Psoas muscle (tissue), 8 donors: ENCODE measurements at regions of chr17 and their contacts with region 1.

Region 1: DNA sequence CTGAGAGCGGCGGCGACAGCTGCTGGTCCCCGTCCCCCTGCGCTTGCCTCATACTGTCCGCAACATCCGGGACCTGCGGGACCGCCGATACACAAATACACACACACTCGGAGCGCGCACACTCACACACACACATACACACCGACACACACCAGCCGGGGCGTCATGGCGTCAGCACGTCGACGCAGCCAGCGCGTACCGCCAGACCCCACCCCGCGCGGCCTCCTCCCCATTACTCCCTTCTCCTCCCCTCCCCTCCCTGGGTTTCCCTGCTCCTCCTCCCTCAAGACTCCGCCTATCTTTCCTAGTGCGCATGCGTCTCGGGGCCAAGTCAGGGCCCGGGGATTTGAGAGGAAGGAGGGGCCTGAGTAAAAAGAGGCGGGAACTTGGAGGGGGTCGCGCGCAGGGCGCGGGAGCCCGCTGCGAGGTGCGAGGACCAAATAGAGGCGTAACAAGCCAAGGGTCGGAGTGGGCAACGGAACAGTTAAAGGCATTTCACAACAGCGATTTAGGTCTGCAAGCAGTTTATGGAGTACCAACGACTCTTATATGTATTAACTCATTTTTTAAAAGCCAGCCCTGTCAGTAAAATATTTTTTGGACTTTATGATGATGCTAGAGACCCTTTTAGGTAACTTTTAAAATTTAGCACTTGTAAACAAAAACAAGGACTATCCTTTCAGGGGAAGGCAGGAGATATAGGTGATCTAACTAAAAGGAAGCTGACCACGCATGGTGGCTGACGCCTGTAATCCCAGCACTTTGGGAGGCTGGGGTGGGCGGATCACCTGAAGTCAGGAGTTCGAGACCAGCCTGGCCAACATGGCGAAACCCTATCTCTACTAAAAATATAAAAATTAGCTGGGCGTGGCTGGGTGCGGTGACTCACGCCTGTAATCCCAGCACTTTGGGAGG is at the start of gene SPOP:
- DNase-seq: peak; percentile 99 to 100
- ATAC-seq: peak; percentile 95 to 98 (median 96)
- H3K4me3 ChIP-seq: peak within 1 kb of the TSS; percentile 69
- H3K27ac ChIP-seq: peak within 1 kb of the TSS; percentile 93
- H3K4me1 ChIP-seq: peaks cover 37% of the 10 kb centered on the region
- H3K27me3 ChIP-seq: no peaks in the 10 kb centered on the region
- CTCF ChIP-seq: no peak
- total RNA-seq, gene SPOP: 37.1 to 59.7 (median 52.0) TPM

Region 2: GRCh38 chr17:49616601-49617131 is 61.5 kb before region 1 on chr17:
- intact Hi-C with region 1: loop called (anchors 5 kb)
- DNase-seq: peak; percentile 79 to 82
- ATAC-seq: peak; percentile 79 to 85 (median 84)
- H3K4me3 ChIP-seq: peak overlapping the region; percentile 13
- H3K27ac ChIP-seq: peak overlapping the region; percentile 43
- H3K4me1 ChIP-seq: peaks cover 49% of the 10 kb centered on the region
- H3K27me3 ChIP-seq: no peaks in the 10 kb centered on the region
- CTCF ChIP-seq: no peak

Region 3: GRCh38 chr17:49624896-49625295 is 53.3 kb before region 1 on chr17:
- intact Hi-C with region 1: loop called in 1 of 2 experiments (anchors 5 kb)
- DNase-seq: no peak
- ATAC-seq: peak in 3 of 4 donors; percentile 53 to 68 (median 57)
- H3K4me3 ChIP-seq: no peak overlapping the region
- H3K27ac ChIP-seq: no peak overlapping the region
- H3K4me1 ChIP-seq: peaks cover 60% of the 10 kb centered on the region
- H3K27me3 ChIP-seq: no peaks in the 10 kb centered on the region
- CTCF ChIP-seq: no peak

Region 4: GRCh38 chr17:49637050-49637449 is 41.1 kb before region 1 on chr17:
- intact Hi-C with region 1: loop called in 1 of 2 experiments (anchors 5 kb)
- DNase-seq: no peak
- ATAC-seq: no peak
- H3K4me3 ChIP-seq: no peak overlapping the region
- H3K27ac ChIP-seq: peak overlapping the region; percentile 62
- H3K4me1 ChIP-seq: peaks cover 59% of the 10 kb centered on the region
- H3K27me3 ChIP-seq: no peaks in the 10 kb centered on the region
- CTCF ChIP-seq: no peak